Activated T-helper 2 cell treated with anti-CD3 and anti-CD28 coated beads, Interferon-gamma antibody, Interleukin-2, Interleukin-4, amounts not matched to agents 10 μg/mL and 5 μg/mL and 100 μg/mL, durations not matched to agents 14 hours and 24 hours and 36 hours (primary cell): ENCODE measurements at regions of chr6 and their contacts with region 1.

Region 1: GRCh38 chr6:14144678-14145113 is 27.1 kb downstream of the CD83 start:
- DNase-seq: peak; percentile 50
- H3K4me3 Mint-ChIP-seq: no peak overlapping the region
- H3K27ac Mint-ChIP-seq: no peak overlapping the region
- H3K4me1 Mint-ChIP-seq: peaks cover 13% of the 10 kb centered on the region
- H3K27me3 Mint-ChIP-seq: no peaks in the 10 kb centered on the region

Region 2: DNA sequence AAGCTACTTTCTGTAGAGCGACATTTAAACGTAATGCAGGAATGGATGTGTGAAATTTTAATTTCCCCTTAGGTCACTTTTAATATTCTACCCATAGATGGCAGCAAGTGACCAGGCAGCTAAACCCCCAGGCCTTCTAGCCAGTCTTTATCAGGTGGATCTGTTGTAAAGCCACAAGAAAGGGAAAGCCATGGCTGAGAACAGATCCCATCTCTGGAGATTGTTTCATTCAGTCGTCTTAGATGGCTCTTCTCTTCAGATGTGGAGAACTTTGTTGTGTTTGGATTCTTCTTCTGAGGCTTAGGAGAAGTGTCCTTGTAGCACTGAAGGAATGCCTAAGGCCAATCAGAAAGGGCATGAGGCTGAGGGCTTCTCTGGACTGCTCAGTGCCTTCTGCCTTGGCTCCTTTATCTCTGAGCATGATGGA is 235.7 kb before region 1 on chr6:
- intact Hi-C with region 1: loop called (anchors 1 kb)
- DNase-seq: peak; percentile 20
- H3K4me3 Mint-ChIP-seq: no peak overlapping the region
- H3K27ac Mint-ChIP-seq: no peak overlapping the region
- H3K4me1 Mint-ChIP-seq: peaks cover 10% of the 10 kb centered on the region
- H3K27me3 Mint-ChIP-seq: peaks cover 70% of the 10 kb centered on the region

Region 3: GRCh38 chr6:14046476-14047068 is 98.1 kb before region 1 on chr6:
- intact Hi-C with region 1: loop called (anchors 1 kb)
- DNase-seq: peak; percentile 31
- H3K4me3 Mint-ChIP-seq: no peak overlapping the region
- H3K27ac Mint-ChIP-seq: no peak overlapping the region
- H3K4me1 Mint-ChIP-seq: no peaks in the 10 kb centered on the region
- H3K27me3 Mint-ChIP-seq: peaks cover 48% of the 10 kb centered on the region